Mammary epithelial cell (primary cell): ENCODE measurements at regions of chr3 and their contacts with region 1.

Region 1: GRCh38 chr3:125585595-125586223 is 9.6 kb downstream of the OSBPL11 start:
- DNase-seq: peak; percentile 37
- H3K4me3 ChIP-seq: no peak overlapping the region
- H3K27ac ChIP-seq: no peak overlapping the region
- H3K4me1 ChIP-seq: peaks cover 5% of the 10 kb centered on the region
- H3K27me3 ChIP-seq: no peaks in the 10 kb centered on the region
- CTCF ChIP-seq: peak; percentile 87 to 95

Region 2: GRCh38 chr3:124761250-124761796 is 824.4 kb before region 1 on chr3:
- CTCF ChIA-PET with region 1: no interaction called
- dilution Hi-C with region 1: no loop called
- in situ Hi-C with region 1: no loop called
- intact Hi-C with region 1: loop called (anchors 10 kb)
- DNase-seq: peak; percentile 46
- H3K4me3 ChIP-seq: no peak overlapping the region
- H3K27ac ChIP-seq: no peak overlapping the region
- H3K4me1 ChIP-seq: no peaks in the 10 kb centered on the region
- H3K27me3 ChIP-seq: no peaks in the 10 kb centered on the region
- CTCF ChIP-seq: peak; percentile 95 to 98

Region 3: DNA sequence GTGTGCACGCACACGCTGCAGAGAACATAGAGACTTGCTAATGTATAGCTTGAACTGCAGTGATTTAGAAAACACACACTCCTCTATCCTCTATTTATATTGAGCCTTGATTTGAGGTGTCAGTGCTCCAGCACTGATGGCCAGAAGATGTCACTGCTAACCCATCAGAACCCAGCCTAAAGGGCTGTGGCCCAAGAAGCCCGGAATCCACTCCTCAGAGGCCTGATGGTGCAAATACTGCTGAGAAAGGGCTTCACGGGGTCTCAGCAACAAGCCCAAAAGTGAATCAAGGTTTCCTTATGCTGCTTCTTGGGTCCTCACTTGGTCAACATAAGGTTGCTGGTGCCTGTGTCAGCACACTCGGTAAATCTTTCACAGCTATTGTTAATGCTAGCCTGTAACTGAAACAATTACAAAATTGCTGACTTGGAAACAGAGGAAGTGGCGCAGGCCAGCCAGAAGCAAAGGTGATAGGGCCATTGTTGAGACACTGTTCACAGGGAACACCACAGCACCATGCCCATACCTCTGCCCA is 590.2 kb before region 1 on chr3:
- CTCF ChIA-PET with region 1: no interaction called
- dilution Hi-C with region 1: no loop called
- in situ Hi-C with region 1: no loop called
- intact Hi-C with region 1: loop called (anchors 1 kb)
- DNase-seq: peak; percentile 27
- H3K4me3 ChIP-seq: no peak overlapping the region
- H3K27ac ChIP-seq: no peak overlapping the region
- H3K4me1 ChIP-seq: no peaks in the 10 kb centered on the region
- H3K27me3 ChIP-seq: no peaks in the 10 kb centered on the region
- CTCF ChIP-seq: peak; percentile 65 to 67

Region 4: GRCh38 chr3:125202197-125202596 is 383.5 kb before region 1 on chr3:
- CTCF ChIA-PET with region 1: no interaction called
- dilution Hi-C with region 1: no loop called
- in situ Hi-C with region 1: no loop called
- intact Hi-C with region 1: loop called (anchors 10 kb)
- DNase-seq: no peak
- H3K4me3 ChIP-seq: no peak overlapping the region
- H3K27ac ChIP-seq: no peak overlapping the region
- H3K4me1 ChIP-seq: no peaks in the 10 kb centered on the region
- H3K27me3 ChIP-seq: no peaks in the 10 kb centered on the region
- CTCF ChIP-seq: peak; percentile 37 to 42

Region 5: DNA sequence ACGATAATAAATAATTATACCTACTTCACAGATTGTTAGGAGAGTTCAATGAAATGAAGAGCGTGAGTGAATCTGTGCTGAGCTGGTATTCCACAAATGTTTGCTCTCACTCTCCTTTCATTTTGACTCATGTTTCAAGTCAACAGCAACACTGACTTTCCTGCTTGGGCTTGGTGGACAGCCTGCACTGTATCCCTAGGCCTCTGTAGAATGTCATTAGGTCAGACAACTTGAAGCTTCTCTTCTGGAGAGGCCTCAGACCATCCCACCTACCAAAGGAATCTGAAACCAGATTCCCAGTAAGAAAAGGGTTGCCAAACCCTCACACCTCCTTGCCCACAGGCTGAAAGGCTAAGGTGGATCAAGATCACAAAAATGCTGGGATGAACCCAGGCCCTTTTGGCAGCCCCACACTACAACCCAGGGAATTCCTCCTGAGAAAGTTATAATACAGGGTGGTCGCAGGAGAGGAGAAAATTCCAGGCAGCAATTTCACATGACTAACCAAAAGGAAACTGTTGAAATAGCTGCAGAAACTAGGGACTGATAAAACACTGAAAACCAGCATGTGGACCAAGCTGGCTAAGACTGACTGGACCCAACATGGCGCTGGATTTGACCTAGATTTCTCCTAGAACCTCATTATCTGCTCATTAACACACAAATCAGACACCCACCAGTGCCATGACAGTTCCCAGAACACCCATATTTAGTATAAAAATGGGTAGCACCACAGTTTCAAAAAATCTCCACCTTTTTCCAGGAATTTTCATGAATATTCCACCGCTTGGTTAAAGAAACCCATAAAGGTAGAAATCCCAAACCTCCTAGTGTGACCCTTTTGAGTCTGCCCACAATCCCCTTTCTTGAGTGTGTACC is 153.6 kb before region 1 on chr3:
- CTCF ChIA-PET with region 1: no interaction called
- dilution Hi-C with region 1: no loop called
- in situ Hi-C with region 1: no loop called
- intact Hi-C with region 1: loop called (anchors 2 kb)
- DNase-seq: no peak
- H3K4me3 ChIP-seq: no peak overlapping the region
- H3K27ac ChIP-seq: no peak overlapping the region
- H3K4me1 ChIP-seq: peaks cover 14% of the 10 kb centered on the region
- H3K27me3 ChIP-seq: no peaks in the 10 kb centered on the region
- CTCF ChIP-seq: no peak